Lower leg skin (tissue), 4 donors: ENCODE measurements at regions of chr19 and their contacts with region 1.

Region 1: DNA sequence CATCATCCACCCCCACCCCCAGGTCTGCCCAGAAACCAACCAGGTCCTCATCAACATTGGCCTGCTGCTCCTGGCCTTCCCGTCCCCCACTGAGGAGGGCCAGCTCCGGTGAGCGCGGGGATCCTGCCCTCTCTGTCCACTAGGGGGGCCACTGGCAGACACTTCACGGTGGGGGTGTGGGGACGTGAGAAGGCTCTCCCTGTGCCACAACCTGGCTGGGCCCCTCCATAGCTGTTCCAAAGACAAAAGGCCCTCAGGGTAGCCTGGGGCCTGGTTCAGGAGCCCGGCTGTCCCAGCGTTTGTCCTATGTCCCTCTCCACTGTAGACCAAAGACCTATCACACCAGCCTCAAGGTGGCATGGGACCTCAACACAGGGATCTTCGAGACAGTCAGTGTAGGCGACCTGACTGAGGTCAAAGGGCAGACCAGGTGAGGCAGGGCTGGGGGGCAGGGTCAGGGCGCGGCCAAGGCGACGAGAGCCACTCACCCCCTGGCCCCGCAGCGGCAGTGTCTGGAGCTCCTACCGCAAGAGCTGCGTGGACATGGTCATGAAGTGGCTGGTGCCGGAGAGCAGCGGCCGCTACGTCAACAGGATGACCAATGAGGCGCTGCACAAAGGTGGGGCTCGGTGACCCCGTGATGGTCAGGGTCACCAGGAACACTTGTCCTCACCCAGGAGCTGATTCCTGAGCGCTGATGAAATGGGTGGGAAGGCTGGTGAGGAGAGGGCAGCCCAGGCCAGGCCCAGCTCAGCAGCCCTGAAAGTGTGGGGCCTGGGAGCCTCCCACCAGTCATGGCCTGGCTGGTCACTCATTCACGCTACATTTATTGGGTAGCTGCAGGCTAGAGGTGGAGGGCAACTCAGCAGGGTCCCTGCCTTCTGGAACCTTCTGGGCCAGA is 7.9 kb downstream of the DCAF15 start:
- DNase-seq: no peak
- H3K4me3 ChIP-seq: no peak overlapping the region
- CTCF ChIP-seq: no peak
- POLR2A ChIP-seq: no peak

Region 2: GRCh38 chr19:13920940-13921761 is 39.1 kb before region 1 on chr19:
- intact Hi-C with region 1: no loop called
- DNase-seq: no peak
- H3K4me3 ChIP-seq: no peak overlapping the region
- CTCF ChIP-seq: no peak
- POLR2A ChIP-seq: no peak

Region 3: DNA sequence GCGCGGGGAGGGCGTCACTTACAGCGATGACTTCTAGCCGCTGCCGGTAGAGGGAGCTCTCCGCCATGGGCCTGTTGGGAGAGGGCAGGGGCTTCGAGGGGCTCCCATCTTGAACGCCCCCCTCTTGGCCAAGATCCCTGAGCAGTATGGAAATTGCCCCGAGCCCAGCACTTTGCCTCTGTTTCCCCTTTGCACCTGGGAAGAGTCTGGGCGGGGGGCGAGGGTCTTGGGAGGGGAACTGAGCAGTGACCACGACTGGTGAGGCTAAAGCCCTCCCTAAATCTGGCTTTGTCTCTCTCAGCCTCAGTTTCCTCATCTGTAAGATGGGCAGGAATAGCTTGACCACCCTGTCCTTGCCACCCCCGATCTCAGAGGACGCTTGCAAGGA is 98.9 kb after region 1 on chr19:
- intact Hi-C with region 1: loop called (anchors 10 kb)
- DNase-seq: peak in 1 of 2 donors; percentile 80
- H3K4me3 ChIP-seq: no peak overlapping the region
- CTCF ChIP-seq: no peak
- POLR2A ChIP-seq: no peak

Region 4: GRCh38 chr19:15466851-15467733 is 1506.9 kb after region 1 on chr19:
- intact Hi-C with region 1: no loop called
- DNase-seq: no peak
- H3K4me3 ChIP-seq: no peak overlapping the region
- CTCF ChIP-seq: no peak
- POLR2A ChIP-seq: no peak